Activated B cell treated with CpG ODN at 0.5 μM for 24 hours (primary cell): ENCODE measurements at regions of chr10 and their contacts with region 1.

Region 1: GRCh38 chr10:115831016-115831415 is 442.0 kb downstream of the GFRA1 start:
- DNase-seq: no peak
- ATAC-seq: no peak
- H3K4me3 Mint-ChIP-seq: no peak overlapping the region
- H3K27ac Mint-ChIP-seq: no peak overlapping the region
- H3K4me1 Mint-ChIP-seq: no peaks in the 10 kb centered on the region
- H3K27me3 Mint-ChIP-seq: no peaks in the 10 kb centered on the region
- CTCF ChIP-seq: no peak

Region 2: GRCh38 chr10:115850666-115851065 is 19.6 kb after region 1 on chr10:
- CTCF ChIA-PET with region 1: no interaction called
- POLR2A ChIA-PET with region 1: no interaction called
- intact Hi-C with region 1: loop called (anchors 1 kb)
- DNase-seq: no peak
- ATAC-seq: no peak
- H3K4me3 Mint-ChIP-seq: no peak overlapping the region
- H3K27ac Mint-ChIP-seq: no peak overlapping the region
- H3K4me1 Mint-ChIP-seq: no peaks in the 10 kb centered on the region
- H3K27me3 Mint-ChIP-seq: no peaks in the 10 kb centered on the region
- CTCF ChIP-seq: no peak